ENCODE measurements at regions of chr3 and their contacts with region 1.

Region 1: GRCh38 chr3:8111069-8111798 is 390.4 kb upstream of the LMCD1 start:
- DNase-seq: no peak
- H3K4me3 ChIP-seq: peak overlapping the region in 3 of 4 donors; percentile 5 to 38 (median 13)
- H3K27ac ChIP-seq: no peak overlapping the region
- H3K4me1 ChIP-seq: peaks cover 0 to 12% (median 9%) of the 10 kb centered on the region in 4 donors
- H3K27me3 ChIP-seq: no peaks in the 10 kb centered on the region
- CTCF ChIP-seq: peak; percentile 72 to 86 (median 77)
- EP300 ChIP-seq: no peak
- POLR2A ChIP-seq: no peak

Region 2: DNA sequence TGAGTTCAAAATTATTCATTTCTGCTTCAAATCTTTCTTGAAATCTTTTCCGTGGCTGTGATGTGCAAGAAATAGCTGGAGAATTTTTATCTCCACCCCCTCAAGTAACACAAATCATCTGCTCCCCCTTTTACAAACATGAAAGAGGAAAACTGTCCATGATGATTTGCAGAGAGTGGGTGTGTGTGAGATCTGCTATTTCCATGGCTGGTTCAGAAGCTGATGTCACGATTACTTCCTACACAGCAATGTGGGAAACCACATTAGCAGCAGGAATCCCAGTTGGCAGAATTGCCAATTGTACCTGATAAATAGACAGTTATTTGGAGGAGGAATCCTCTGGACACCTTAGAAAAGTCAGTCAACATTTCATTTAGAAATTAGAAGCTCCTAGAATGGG is 1325.5 kb before region 1 on chr3:
- intact Hi-C with region 1: loop called (anchors 10 kb)
- DNase-seq: no peak
- H3K4me3 ChIP-seq: no peak overlapping the region
- H3K27ac ChIP-seq: no peak overlapping the region
- H3K4me1 ChIP-seq: no peaks in the 10 kb centered on the region
- H3K27me3 ChIP-seq: no peaks in the 10 kb centered on the region
- CTCF ChIP-seq: no peak
- EP300 ChIP-seq: no peak
- POLR2A ChIP-seq: no peak